Activated naive CD4-positive, alpha-beta T cell treated with anti-CD3 and anti-CD28 coated beads for 36 hours (primary cell): ENCODE measurements at regions of chr2 and their contacts with region 1.

Region 1: DNA sequence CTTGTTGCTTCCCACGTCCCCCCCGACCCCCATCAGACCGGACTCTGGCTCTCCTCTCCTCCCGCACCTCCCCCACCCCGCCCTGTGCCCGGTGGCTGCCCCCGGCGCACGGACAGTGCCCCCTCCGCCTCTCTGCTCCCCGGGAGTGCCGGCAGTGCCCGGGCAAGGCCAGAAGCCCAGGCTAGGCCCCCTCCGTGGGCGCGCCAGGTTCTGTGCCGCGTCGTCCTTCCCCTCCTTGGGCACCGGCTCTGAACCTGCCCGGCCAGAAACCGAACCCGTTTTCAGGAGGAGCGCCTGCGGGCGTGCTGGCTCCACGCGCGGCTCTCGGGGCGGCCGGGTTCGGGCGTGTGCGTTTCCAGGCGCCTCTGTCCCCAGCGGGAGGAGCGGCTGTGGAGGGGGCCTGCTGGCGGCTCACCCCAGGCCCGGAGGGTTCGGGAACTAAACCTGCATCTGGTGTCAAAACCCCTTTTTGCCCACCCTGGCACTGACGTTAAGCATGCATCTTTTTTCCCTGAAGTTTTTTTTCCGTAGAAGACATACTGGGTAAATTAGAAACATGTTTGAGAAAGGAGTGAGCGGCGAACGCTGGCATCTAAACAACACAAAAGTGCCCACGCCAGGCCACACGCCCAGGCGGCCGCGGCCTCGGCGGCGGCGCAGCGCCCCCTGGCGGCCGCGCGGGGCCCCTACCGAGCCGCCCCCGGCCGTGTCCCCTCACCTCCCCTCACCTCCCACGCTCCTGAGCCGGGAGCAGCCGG is 123.9 kb upstream of the SLC1A4 start:
- DNase-seq: peak; percentile 59
- H3K4me3 Mint-ChIP-seq: peak overlapping the region; percentile 55
- H3K27ac Mint-ChIP-seq: no peak overlapping the region
- H3K4me1 Mint-ChIP-seq: no peaks in the 10 kb centered on the region
- H3K27me3 Mint-ChIP-seq: peaks cover 3% of the 10 kb centered on the region

Region 2: DNA sequence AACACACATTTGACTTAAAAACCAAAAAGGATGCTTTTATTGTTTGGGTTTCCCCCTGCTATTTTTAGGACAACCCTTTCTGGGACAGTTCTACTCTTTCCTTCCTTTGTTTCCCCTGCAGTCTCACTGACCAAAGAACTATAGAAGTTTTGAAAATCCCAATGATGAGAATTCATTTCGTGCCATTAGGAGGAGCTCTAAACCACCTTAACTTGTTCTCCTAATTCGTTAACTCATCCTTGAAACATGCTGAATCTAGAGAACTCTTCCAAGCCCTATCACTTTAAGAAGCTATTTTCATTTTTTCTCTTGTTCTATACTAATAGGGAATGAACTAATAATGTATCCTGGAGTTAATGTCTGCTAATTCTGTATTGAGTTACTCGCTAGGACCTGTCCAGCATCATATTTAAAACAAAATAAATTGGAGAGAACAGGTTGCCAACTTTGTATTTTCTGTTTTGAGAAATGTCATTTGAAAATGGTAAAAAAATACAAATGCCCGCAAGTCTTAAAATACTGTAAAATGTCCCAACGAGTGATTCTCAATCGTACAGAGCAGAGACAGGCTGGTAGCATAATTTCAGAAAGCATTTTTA is 278.3 kb before region 1 on chr2:
- CTCF ChIA-PET with region 1: interaction called, 10 read pairs
- intact Hi-C with region 1: loop called (anchors 1 kb)
- DNase-seq: no peak
- H3K4me3 Mint-ChIP-seq: no peak overlapping the region
- H3K27ac Mint-ChIP-seq: no peak overlapping the region
- H3K4me1 Mint-ChIP-seq: peaks cover 16% of the 10 kb centered on the region
- H3K27me3 Mint-ChIP-seq: no peaks in the 10 kb centered on the region

Region 3: DNA sequence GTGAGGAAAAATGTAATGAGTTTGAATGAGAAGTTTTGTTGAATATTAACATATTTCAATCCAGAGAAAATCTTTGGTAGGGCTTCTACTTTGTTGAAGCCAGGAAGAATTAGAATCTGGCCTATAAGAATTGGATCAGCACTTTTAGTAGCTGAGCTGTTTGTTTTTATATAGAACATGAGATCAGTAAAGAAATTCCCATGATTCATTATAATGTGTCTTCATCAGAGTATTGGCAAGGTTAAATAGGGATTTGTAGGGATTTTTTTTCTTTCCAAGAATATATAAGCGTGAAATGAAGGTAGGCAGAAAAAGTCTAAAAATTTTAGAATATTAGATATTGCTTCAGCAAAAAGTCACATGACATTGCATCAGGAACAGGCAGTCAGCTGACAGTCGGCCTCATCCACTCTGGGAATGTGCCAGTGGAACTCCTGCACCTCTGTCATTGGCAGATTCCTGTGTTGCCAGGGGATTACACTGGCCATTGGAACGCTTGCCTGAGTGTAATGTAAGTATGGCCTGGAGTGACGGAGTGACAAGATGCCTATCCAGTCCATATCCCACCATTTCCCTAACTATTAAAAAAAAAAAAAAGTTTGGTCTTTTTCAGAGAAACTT is 272.1 kb before region 1 on chr2:
- CTCF ChIA-PET with region 1: interaction called, 10 read pairs
- intact Hi-C with region 1: no loop called
- DNase-seq: no peak
- H3K4me3 Mint-ChIP-seq: no peak overlapping the region
- H3K27ac Mint-ChIP-seq: no peak overlapping the region
- H3K4me1 Mint-ChIP-seq: peaks cover 30% of the 10 kb centered on the region
- H3K27me3 Mint-ChIP-seq: no peaks in the 10 kb centered on the region

Region 4: DNA sequence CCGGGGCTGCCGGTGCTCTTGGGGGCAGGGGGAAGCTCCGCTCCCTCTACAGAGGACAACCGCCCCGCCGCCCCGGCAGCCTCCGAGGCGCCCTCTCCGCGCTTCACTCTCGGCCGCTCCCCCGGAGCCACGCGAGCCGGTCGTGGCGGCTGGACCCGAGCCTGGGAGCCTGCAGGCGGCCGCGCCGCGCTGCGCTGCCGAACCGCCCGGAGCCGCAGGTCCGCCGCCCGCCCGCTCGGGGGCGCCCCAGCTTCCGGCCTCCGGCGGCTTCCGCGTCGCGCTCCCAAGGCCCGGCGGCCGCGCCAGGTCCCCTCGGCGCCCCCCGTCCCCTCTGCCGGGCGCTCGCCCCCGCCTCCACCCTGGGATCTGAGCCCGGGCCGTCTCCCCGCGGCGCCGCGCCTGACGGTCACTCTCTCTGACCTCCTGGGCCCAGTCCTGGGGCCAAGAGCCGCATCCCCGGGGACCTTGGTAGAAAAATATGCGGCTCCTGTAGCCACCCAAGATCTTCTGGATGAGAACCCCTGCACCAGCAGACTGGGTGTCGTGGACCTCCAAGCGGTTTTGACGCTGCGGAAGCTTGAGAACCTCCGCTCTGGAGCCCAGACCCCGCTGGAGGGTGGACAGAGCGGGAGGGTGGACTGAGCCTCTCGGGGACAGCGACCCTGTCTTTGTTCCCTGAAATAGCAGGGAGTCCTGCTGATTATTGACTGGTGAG is 255.9 kb before region 1 on chr2:
- CTCF ChIA-PET with region 1: interaction called, 5 read pairs
- intact Hi-C with region 1: loop called (anchors 1 kb)
- DNase-seq: peak; percentile 62
- H3K4me3 Mint-ChIP-seq: peak overlapping the region; percentile 65
- H3K27ac Mint-ChIP-seq: no peak overlapping the region
- H3K4me1 Mint-ChIP-seq: peaks cover 24% of the 10 kb centered on the region
- H3K27me3 Mint-ChIP-seq: no peaks in the 10 kb centered on the region

Region 5: DNA sequence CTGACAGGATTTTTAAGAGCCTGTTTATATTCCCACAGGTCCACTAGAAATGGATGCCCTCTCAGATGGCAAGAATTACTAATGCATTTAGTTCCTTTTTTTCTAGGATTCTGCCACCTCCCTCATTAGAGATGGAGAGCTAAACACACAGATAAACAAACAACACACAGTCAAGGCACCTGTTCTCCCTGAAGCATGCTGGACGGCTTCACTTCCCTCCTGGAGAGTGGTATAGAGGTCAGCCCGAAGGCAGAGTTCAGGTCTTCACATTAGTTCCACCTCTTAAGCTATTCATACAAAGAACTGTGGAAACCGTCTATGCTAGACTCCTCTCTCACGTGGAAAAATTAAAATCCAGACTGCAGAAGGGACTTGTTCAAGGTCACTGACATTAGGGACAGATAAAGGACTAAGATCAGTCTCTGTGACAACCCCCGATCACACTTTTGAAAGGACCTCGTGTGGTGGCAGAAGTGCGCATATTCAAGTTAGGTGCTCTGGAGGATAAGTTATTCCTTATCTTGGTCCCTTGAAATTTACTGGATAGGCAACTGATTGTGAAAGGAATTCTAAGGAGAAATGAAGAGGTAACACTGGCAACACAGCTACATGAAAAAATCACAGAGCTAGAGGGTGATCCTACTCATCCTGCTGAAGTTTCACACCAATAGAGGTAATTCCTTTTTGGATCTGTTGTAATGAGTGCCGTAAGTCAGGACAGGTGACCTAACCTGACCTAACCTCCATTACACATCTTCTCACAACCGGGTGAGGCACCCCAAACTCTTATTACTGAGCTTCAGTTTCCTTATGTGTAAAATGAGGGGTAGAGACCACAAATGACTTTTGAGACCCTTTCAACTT is 492.1 kb after region 1 on chr2:
- CTCF ChIA-PET with region 1: no interaction called
- intact Hi-C with region 1: no loop called
- DNase-seq: peak; percentile 29
- H3K4me3 Mint-ChIP-seq: no peak overlapping the region
- H3K27ac Mint-ChIP-seq: no peak overlapping the region
- H3K4me1 Mint-ChIP-seq: peaks cover 22% of the 10 kb centered on the region
- H3K27me3 Mint-ChIP-seq: peaks cover 7% of the 10 kb centered on the region